GM10248 (cell line): ENCODE measurements at regions of chr10 and their contacts with region 1.

Region 1: DNA sequence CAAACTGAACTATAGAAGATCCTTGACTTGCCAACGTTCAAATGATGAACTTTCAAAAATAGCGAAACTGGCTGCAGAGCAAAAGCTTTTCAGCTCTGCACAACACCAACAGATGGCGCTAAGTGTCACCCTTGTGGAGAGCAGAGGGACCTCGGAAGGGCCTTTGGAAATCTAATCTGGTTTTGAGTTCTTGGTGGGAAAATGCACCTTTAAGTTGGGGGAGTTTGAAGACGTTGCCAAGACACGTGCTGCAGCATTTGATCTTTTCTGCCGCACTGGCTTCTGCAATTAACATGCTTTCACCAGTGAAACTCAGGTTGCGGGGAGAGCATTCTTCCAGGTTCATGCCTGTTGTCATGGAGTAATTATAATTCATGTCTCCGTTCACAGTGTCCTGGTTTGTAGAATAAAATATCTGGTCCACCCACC is 26.3 kb upstream of the WDR11 start:
- DNase-seq: peak; percentile 38
- CTCF ChIP-seq: peak; percentile 53

Region 2: DNA sequence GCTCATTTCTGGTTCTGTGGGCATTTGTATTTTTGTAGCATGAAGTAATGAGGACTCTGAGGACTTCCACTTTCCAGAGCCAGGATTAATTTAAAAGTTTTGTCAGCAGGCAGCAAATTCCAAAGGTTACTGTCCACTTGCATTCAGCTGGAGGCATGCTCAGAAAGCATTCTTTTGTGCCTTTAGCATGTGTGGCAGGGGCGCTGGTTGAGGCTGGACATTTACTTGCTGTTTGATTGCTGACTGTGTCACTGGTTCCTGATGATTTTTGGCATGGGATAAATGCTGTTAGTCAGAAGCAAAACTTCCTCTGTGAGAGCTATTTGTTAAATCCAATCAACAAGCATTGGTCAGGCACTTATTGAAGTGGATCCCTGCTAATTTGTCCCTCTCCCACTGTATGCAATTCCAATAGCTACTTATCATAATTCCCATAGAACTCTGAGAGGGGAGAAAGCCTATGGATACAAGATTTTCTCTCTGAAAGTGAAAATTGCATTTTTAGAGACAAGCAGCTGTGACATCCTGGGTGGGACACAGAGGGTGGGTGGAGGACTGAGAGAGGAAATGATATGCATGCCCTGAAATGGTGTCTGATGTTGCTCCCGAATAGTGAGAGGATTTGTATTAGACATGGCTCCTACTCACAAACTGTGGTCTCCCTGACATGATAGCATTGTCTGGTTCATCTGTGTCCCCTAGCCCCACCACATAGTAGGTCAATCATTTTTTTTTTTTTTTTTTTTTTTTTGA is 134.9 kb before region 1 on chr10:
- CTCF ChIA-PET with region 1: no interaction called
- POLR2A ChIA-PET with region 1: no interaction called
- DNase-seq: no peak
- CTCF ChIP-seq: no peak

Region 3: DNA sequence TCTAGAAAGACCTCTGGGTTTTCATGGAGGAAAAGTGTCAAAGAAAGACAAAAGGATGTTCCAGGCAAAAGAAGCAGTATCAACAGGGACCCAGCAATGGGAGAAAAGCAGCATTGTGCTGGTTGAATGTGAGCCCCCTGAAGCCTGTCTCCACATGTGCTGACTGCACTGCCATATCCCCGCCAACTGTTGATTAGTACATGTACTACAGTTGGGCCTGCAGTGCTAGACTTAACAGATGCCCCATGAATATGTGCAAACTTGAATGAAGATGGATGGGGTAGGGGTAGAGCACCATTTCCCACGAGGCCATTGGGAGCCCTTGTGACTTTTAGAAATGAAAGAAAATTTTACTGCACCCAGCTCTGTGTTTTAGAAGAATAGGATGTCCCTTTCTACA is 10.7 kb after region 1 on chr10:
- CTCF ChIA-PET with region 1: interaction called, 16 read pairs
- POLR2A ChIA-PET with region 1: no interaction called
- DNase-seq: no peak
- CTCF ChIP-seq: no peak

Region 4: GRCh38 chr10:120841522-120842189 is 16.8 kb after region 1 on chr10:
- CTCF ChIA-PET with region 1: interaction called, 16 read pairs
- POLR2A ChIA-PET with region 1: no interaction called
- DNase-seq: no peak
- CTCF ChIP-seq: no peak